BJ (cell line): ENCODE measurements at regions of chr20 and their contacts with region 1.

Region 1: GRCh38 chr20:43749734-43750294 is 23.0 kb upstream of the GTSF1L start:
- DNase-seq: no peak
- H3K4me3 ChIP-seq: no peak overlapping the region
- H3K27me3 ChIP-seq: no peaks in the 10 kb centered on the region
- CTCF ChIP-seq: peak; percentile 98

Region 2: DNA sequence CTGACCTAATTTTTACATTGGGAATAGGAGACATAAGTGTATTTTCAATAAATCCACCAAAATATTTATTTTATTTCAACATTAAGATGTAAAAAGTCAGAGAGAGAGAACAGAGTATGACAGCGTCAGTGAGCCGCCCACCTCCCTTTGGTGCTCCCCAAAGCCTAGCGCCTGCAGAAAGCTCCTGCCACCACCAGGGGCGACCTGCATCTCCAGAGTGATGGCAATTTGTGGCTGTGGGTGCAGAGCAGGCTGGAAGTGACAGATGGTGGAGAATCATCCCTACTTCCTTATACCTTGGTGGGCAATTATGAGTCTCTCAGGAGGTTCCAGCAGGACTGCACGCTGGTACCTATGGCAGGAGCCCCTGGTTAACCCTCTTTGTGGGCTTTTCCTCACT is 647.4 kb before region 1 on chr20:
- CTCF ChIA-PET with region 1: no interaction called
- POLR2A ChIA-PET with region 1: no interaction called
- DNase-seq: no peak
- H3K4me3 ChIP-seq: no peak overlapping the region
- H3K27me3 ChIP-seq: no peaks in the 10 kb centered on the region
- CTCF ChIP-seq: no peak

Region 3: DNA sequence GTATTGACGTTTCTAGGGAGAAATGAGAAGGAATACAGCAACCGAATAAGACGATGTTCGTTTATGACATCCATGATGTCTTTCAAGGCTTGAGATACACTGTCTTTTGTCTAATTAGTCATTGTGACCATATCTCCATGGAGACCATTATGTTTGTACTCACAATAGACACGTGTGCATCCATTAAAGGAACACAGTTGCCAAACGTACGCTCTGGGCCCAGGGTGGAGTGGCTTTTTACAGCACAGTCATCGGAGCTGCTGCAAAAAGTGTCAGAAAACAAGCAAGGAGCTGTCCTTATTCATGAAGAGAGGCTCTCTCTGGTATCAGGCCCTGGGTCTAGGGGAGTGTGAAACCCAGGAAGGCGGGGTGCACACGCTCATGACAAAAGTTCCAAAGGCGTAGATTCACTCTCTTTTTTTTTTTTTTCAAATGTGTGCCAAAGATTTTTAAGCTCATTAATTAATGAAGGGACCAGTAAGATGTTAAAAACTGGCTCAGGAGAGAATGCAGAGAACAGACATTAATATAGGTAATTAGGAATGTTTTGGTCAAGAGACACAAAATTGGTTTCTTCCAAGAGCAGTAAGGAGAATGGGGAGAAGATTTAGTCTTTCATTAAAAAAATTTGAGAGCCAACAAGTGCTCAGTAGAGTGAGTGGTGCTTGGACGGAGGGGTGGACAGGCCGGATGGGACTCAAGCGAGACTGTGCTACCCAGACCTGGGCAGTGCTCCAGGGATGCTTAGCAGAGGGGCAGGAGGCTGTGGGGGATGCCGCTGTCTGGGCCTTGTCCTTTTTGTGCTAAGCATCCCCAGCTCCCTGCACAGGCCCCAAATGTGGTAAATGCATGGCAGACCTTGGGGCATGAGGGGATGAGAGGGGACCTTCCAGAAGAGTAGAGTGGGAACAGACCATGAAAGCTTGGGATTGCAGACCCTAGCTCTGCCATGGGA is 11.8 kb after region 1 on chr20:
- CTCF ChIA-PET with region 1: interaction called, 29 read pairs
- POLR2A ChIA-PET with region 1: no interaction called
- DNase-seq: no peak
- H3K4me3 ChIP-seq: no peak overlapping the region
- H3K27me3 ChIP-seq: peaks cover 4% of the 10 kb centered on the region; the same call in 1 of the 2 replicates
- CTCF ChIP-seq: no peak

Region 4: DNA sequence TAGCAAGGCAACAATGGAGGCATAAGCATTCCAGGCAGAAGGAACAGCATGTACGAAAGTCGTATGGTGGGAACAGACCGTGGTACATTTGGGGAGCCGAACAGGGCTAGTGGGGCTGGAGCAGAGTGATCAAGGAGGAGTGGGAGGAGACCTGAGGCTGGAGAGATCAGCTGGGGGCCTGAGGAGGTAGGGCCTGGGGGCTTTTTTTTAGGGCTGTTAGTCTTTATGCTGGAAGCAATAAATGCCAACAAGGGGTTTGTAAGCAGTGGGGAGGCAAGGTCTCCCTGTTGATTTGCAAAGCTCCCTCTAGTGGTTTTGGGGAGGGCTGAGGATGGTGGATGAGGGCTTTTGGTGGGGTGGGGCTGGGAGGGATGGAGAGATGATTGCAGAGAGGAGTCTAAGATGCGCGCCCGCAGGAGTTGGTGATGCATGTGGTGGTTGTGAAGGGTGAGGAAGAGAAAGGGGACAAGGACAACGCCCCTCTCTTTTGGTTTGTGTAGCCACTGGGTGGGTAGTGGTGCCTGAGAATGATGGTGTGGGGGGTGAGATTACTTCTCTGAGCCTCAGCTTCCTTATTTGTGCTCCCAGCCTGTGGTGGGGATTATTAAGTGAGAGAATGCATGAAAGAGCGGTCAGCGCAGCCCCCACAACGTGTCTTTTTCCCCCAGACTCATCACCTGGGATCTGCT is 90.7 kb after region 1 on chr20:
- CTCF ChIA-PET with region 1: interaction called, 10 read pairs
- POLR2A ChIA-PET with region 1: no interaction called
- DNase-seq: no peak
- H3K4me3 ChIP-seq: no peak overlapping the region
- H3K27me3 ChIP-seq: no peaks in the 10 kb centered on the region
- CTCF ChIP-seq: peak; percentile 52

Region 5: DNA sequence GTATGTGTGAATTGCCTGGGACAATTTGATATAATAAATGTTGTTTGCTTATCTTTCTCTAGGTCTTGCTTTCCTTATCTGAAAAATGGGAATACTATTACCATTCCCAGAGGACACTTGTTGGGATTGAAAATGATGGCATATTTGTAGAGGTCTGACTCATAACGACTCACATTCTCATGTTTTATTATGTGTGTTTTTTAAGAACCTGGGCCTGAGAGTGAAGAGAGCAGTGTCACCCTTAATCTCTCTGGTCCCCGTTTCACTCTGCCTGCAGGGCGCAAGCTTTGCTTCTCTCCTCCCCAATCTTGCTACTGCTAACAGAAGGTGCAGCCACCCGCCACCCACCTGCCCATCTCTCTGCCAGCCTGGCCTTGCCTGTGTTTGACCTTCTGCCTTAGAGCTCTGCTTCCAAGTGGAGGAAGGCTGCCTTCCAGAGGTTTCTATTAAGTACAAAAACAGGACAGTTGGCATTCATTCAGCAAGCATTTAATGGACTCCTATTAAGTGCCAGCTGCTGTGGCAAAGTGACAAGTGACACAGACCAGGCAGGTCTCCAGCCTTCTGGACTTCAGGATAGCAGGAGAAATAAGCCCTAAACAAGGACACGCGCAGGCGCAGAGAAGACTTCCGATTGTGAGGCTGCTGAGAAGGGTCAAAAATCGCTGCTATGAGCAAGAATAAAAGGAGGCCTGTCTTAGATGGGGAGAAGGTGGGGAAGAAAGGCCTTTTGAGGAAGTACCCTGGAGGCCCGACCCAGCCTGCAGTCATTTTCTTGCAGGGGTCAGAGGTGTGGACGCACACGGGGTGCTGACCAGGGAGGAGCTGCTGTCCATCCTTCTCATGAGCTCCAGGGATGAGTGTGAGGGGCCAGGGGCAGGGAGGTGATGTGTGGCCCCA is 324.7 kb after region 1 on chr20:
- CTCF ChIA-PET with region 1: interaction called, 140 read pairs
- POLR2A ChIA-PET with region 1: interaction called, 3 read pairs
- DNase-seq: no peak
- H3K4me3 ChIP-seq: no peak overlapping the region
- H3K27me3 ChIP-seq: no peaks in the 10 kb centered on the region
- CTCF ChIP-seq: no peak

Region 6: DNA sequence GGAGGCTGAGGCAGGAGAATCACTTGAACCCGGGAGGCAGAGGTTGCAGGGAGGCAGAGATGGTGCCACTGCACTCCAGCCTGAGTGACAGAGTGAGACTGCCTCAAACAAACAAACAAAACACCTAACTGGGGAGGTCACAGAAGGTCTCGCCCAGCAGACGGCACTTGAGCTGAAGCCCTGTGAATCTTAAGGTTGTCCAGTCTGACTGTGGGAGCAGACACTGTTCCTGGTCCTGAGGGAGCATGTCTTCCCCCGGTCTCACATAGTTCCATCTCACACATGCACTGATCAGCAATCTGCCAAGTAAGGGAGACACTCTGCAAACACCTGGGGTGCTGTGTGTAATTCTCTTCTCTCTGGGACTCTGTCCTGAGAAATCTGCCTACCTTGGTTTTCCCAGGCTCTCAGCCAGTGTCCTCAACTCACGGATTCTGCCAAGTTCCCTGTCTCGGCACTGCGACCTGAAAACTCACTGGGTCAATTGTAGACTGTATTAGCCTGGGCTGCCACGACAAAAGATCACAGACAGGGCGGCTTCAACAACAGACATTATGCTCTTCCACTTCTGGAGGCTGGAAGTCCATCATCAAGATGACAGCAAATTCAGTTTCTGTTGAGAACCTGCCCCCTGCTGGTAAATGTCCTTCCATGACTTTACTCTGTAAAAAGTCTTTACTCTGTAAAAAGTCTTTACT is 342.9 kb after region 1 on chr20:
- CTCF ChIA-PET with region 1: interaction called, 18 read pairs
- POLR2A ChIA-PET with region 1: no interaction called
- DNase-seq: no peak
- H3K4me3 ChIP-seq: no peak overlapping the region
- H3K27me3 ChIP-seq: no peaks in the 10 kb centered on the region
- CTCF ChIP-seq: peak; percentile 64